ENCODE measurements at regions of chr4 and their contacts with region 1.

Region 1: GRCh38 chr4:175891851-175892250 is 79.8 kb upstream of the GPM6A start:
- DNase-seq: peak; percentile 67
- ATAC-seq: peak; percentile 97
- H3K4me3 ChIP-seq: no peak overlapping the region
- H3K27ac ChIP-seq: no peak overlapping the region
- H3K4me1 ChIP-seq: no peaks in the 10 kb centered on the region
- H3K27me3 ChIP-seq: no peaks in the 10 kb centered on the region
- CTCF ChIP-seq: peak; percentile 60

Region 2: GRCh38 chr4:175560604-175561003 is 331.2 kb before region 1 on chr4:
- CTCF ChIA-PET with region 1: interaction called, 5 read pairs
- POLR2A ChIA-PET with region 1: no interaction called
- intact Hi-C with region 1: loop called (anchors 1 kb)
- DNase-seq: peak; percentile 68
- ATAC-seq: peak; percentile 68
- H3K4me3 ChIP-seq: no peak overlapping the region
- H3K27ac ChIP-seq: no peak overlapping the region
- H3K4me1 ChIP-seq: 0 out of 2 replicates have a peak, but pooled peaks cover 5% of the 10 kb centered on the region
- H3K27me3 ChIP-seq: no peaks in the 10 kb centered on the region
- CTCF ChIP-seq: peak; percentile 67

Region 3: GRCh38 chr4:175633310-175633709 is 258.5 kb before region 1 on chr4:
- CTCF ChIA-PET with region 1: no interaction called
- POLR2A ChIA-PET with region 1: no interaction called
- intact Hi-C with region 1: loop called (anchors 5 kb)
- DNase-seq: peak; percentile 88
- ATAC-seq: peak; percentile 82
- H3K4me3 ChIP-seq: peak overlapping the region; percentile 38; the same call in 1 of the 2 replicates
- H3K27ac ChIP-seq: peak overlapping the region; percentile 96
- H3K4me1 ChIP-seq: peaks cover 35% of the 10 kb centered on the region
- H3K27me3 ChIP-seq: no peaks in the 10 kb centered on the region
- CTCF ChIP-seq: no peak

Region 4: GRCh38 chr4:175657571-175657970 is 234.3 kb before region 1 on chr4:
- CTCF ChIA-PET with region 1: no interaction called
- POLR2A ChIA-PET with region 1: no interaction called
- intact Hi-C with region 1: loop called (anchors 1 kb)
- DNase-seq: peak; percentile 51
- ATAC-seq: peak; percentile 50; the same call in 1 of the 2 replicates
- H3K4me3 ChIP-seq: no peak overlapping the region
- H3K27ac ChIP-seq: no peak overlapping the region
- H3K4me1 ChIP-seq: peaks cover 5% of the 10 kb centered on the region; the same call in 1 of the 2 replicates
- H3K27me3 ChIP-seq: no peaks in the 10 kb centered on the region
- CTCF ChIP-seq: peak; percentile 28

Region 5: DNA sequence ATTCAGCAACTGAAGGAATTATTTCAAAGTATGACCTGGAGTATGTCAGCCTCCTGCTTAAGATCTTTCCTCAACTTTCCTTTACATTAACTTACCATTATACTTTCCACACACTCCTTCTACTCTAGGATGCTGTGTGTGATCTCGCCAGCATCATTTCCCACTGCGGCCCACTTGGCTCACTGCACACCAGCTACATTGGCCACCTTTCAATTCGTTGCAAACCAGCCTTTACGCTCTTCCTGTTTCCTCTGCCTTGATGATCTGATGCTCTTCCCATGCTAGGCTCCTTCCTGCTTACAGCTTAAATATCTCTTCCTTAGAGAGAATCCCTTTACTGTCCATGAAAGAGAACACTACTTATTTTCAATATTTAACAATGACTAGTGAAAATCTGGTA is 174.9 kb before region 1 on chr4:
- CTCF ChIA-PET with region 1: no interaction called
- POLR2A ChIA-PET with region 1: no interaction called
- intact Hi-C with region 1: loop called (anchors 5 kb)
- DNase-seq: no peak
- ATAC-seq: no peak
- H3K4me3 ChIP-seq: no peak overlapping the region
- H3K27ac ChIP-seq: no peak overlapping the region
- H3K4me1 ChIP-seq: no peaks in the 10 kb centered on the region
- H3K27me3 ChIP-seq: no peaks in the 10 kb centered on the region
- CTCF ChIP-seq: no peak

Region 6: DNA sequence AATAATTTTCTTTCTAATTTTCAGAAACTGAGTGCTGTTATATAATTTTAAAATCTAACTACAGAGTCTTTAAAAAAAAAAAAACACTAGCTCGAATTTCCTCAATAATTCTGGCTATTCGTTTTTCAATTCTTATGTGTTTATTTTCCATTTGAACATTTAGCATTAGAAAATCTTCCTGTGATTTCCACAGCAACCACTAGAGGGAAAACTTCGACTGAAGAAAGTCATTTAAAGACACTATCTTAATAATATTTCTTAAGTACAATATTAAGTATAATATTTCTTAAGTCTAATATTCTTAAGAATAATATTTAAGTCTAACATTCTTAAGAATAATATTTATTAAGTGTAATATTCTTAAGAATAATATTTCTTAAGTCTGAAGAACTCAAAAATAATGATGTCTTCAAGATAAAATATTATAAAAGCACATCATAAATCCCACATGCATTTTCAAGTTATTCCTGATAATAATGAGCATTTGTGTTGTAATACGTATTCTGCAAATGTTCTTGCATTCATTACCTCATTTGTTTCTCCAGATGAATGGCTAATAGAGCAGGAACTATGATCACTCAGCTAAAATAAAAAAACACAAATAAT is 55.4 kb after region 1 on chr4:
- CTCF ChIA-PET with region 1: no interaction called
- POLR2A ChIA-PET with region 1: no interaction called
- intact Hi-C with region 1: loop called (anchors 2 kb)
- DNase-seq: peak; percentile 58
- ATAC-seq: no peak
- H3K4me3 ChIP-seq: no peak overlapping the region
- H3K27ac ChIP-seq: no peak overlapping the region
- H3K4me1 ChIP-seq: no peaks in the 10 kb centered on the region; the same call in 1 of the 2 replicates
- H3K27me3 ChIP-seq: no peaks in the 10 kb centered on the region
- CTCF ChIP-seq: peak; percentile 46